Head of caudate nucleus (tissue), 42 donors: ENCODE measurements at regions of chr20 and their contacts with region 1.

Region 1: DNA sequence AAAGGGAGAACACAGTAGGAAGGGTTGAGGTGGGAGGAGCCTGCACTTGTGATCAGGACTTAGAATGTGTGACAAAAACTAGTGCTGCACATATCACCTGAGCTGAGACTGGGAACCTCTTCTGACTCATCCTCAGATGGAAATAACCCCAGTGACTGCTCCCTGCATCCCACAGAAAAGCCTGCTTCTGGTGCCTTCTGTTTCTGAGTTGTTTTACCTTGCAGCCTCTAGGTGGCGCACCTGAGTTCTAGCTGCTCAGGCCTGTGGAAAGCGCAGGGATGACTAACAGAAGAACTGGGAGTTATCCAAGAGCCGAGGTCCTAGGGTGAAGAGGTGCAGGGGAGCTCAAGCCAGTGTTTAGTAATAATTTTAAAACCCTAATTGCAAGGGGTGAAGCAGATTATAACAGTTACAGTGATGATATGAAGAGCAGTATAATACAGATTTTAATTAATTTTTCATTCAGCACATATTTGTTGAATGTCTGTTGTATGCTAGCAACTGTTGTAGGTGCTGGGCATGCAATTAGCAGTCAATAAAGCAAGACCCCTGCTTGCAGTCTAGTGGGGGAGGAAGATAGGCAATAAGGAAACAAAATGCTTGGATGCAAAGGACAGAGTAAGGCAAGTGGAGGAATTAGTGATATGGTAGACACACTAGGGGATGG is 302.5 kb downstream of the DHX35 start:
- DNase-seq: peak; percentile 52 to 92 (median 77)

Region 2: GRCh38 chr20:40956542-40957264 is 1692.1 kb after region 1 on chr20:
- intact Hi-C with region 1: loop called (anchors 10 kb)
- DNase-seq: peak in 12 of 42 donors; percentile 18 to 48 (median 30)